ENCODE measurements at regions of chr22 and their contacts with region 1.

Region 1: DNA sequence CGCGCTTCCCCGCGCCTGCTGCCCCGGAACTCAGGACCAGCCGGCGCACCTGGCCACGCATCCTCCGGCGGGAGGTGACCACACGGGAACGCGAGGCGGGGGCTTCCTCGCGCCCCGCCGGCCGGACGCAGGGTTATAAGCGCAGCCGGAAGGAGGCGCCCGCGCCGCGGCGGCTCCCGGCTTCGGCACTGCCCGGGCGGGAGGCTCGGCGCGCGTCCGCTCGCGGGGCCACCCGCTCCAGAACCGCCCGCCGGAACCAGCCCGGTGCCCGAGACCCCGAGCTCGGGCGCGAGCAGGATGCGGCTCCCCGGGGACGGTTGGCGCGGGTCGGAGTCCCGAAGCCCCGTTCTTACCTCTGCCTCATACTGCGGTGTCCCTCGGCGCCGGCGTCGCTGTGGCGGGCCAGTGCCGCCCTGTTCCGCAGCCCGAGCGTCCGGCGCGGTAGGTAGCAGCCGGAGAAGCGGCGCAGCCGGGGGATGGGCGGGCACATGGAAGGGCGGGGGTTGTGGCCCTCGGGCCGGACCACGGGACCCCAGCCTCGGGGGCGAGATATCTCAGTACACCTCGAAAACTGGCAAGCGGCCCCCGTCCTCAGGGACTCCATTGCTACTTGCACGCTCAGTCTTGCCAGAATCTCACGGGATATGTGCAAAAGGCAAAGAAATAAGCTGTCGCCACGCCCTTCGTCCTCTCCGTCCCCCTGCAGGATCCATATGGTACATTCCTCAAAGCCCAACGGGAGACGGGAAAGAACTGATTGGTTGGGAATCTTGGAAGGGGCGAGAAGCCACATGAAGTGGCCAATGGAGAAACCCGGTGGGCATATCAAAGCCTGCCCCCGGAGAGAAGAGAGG is 23.1 kb downstream of the MICAL3 start:
- DNase-seq: peak; percentile 86
- H3K4me3 Mint-ChIP-seq: peak overlapping the region; percentile 80
- H3K27ac Mint-ChIP-seq: peak overlapping the region; percentile 94
- H3K4me1 Mint-ChIP-seq: peaks cover 44% of the 10 kb centered on the region
- H3K27me3 Mint-ChIP-seq: peaks cover 2% of the 10 kb centered on the region

Region 2: GRCh38 chr22:17980638-17981051 is 20.6 kb before region 1 on chr22:
- CTCF ChIA-PET with region 1: no interaction called
- POLR2A ChIA-PET with region 1: no interaction called
- intact Hi-C with region 1: loop called (anchors 1 kb)
- DNase-seq: peak; percentile 71
- H3K4me3 Mint-ChIP-seq: peak overlapping the region; percentile 36
- H3K27ac Mint-ChIP-seq: no peak overlapping the region
- H3K4me1 Mint-ChIP-seq: peaks cover 33% of the 10 kb centered on the region
- H3K27me3 Mint-ChIP-seq: no peaks in the 10 kb centered on the region